ENCODE measurements at regions of chr17 and their contacts with region 1.

Region 1: DNA sequence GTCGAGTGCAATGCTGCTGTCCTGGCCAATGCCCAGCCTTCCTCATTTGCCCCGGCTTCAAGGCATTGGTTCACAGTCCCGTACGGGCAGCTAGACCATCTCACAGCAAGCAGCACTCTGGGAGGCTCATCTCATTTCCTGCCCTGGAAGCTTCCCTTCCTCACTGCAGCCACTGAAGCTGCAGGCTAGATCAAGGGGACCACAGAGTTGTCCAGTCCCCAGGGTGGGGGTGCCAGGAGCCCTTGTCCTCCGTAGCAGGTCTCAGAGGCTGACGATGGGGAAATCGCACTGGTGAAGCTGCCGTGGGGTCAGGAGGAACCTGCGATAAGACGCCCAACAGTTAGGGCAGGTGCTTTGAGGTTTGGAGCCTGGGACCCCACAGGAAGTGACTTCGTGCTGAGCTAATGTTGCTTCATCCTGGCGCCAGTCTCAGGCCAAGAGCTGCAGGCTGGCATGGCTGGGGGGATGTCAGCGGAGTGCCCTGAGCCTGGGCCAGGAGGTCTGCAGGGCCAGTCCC is at the start of gene SPNS3:
- DNase-seq: no peak
- ATAC-seq: no peak
- total RNA-seq, gene SPNS3: 0.24 TPM

Region 2: GRCh38 chr17:4366327-4367063 is 67.1 kb before region 1 on chr17 and contains the start of gene UBE2G1:
- intact Hi-C with region 1: no loop called
- DNase-seq: peak; percentile 99
- ATAC-seq: peak; percentile 93
- total RNA-seq, gene UBE2G1: 107 TPM

Region 3: GRCh38 chr17:4480929-4481898 is 47.6 kb after region 1 on chr17:
- intact Hi-C with region 1: no loop called
- DNase-seq: no peak
- ATAC-seq: no peak

Region 4: DNA sequence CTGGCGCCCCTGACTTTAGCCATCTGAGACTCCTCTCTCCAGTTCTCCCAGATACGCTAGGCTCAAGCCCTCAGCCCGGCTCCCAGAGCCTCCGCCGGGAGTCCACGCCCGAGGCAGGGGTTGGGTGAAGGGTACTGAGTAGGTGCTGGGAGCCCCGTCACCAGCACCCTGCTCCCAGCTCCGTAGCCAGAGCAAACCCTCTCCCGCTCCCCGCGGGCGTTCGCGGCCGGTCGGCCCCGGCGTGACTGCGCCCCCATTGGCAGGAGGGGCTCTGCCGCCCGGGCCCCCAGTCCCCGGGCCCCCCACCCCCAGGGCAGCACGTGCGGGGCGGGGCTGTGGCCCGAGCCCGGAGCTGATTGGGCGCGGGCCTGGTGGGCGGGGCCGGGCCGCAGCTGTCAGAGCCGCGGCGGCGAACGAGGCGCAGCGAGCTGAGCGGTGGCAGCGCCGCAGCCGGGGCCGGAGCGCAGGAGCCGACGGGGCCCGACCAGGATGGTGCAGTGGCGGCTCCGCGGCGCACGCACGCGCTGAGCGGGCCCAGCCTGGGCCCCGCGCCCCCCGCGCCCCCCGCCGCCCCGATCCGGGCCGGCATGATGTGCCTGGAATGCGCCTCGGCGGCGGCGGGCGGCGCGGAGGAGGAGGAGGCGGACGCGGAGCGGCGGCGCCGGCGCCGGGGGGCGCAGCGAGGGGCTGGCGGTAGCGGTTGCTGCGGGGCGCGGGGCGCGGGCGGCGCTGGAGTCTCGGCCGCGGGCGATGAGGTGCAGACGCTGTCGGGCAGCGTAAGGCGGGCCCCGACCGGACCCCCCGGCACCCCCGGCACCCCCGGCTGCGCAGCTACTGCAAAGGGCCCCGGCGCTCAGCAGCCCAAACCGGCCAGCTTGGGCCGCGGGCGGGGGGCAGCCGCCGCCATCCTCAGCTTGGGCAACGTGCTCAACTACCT is 65.2 kb after region 1 on chr17 and contains the start of gene SPNS2:
- intact Hi-C with region 1: loop called (anchors 10 kb)
- DNase-seq: peak; percentile 83
- ATAC-seq: peak; percentile 94
- total RNA-seq, gene SPNS2: 10.4 TPM